ENCODE measurements at regions of chr1 and their contacts with region 1.

Region 1: DNA sequence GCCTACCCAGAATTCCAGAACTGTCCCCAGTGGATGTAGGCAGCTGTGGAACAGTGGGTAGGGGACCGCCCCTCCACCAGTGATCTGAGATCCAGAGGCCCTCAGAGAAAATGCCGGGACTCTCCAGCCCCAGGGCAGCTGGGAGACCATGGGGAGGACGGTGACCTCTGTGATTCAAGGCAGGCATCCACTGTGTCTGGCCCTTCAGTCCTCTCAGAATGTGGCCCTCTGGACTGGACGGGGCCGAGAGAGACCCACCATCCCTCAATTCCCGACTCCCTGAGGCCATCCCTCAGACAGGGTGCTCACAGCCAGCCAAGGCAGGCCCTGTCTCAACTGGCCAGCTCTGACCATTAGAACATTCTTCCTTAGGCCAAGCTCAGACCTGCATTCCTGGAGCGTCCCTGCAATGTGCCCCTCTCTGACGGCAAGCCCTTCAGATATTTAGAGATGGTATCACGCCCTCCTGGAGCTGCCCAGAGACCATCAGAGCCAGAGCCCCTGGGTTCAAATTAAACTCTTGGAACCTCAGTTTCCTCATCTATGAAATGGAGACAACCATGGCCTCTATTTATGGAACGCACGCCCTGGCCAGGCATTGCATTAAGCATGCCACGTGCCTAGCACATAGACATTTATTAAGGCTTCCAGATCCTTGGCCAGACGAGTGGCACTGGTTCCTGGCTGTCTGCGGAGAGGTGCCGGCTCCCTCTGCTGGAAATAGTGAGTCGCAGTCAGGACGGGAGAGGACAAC is 9.6 kb upstream of the EPS8L3 start:
- DNase-seq: peak; percentile 85
- ATAC-seq: peak; percentile 85
- H3K4me3 ChIP-seq: no peak overlapping the region
- H3K27ac ChIP-seq: no peak overlapping the region
- H3K4me1 ChIP-seq: peaks cover 24% of the 10 kb centered on the region
- H3K27me3 ChIP-seq: no peaks in the 10 kb centered on the region
- CTCF ChIP-seq: peak; percentile 99
- POLR2A ChIP-seq: peak; percentile 66
- RAD21 ChIP-seq: peak; percentile 100

Region 2: GRCh38 chr1:109643385-109644230 is 129.7 kb before region 1 on chr1:
- CTCF ChIA-PET with region 1: interaction called, 63 read pairs
- POLR2A ChIA-PET with region 1: interaction called, 3 read pairs
- dilution Hi-C with region 1: no loop called
- in situ Hi-C with region 1: loop called (anchors 5 kb)
- intact Hi-C with region 1: loop called (anchors 1 kb)
- DNase-seq: peak; percentile 65
- ATAC-seq: peak; percentile 77
- H3K4me3 ChIP-seq: no peak overlapping the region
- H3K27ac ChIP-seq: no peak overlapping the region
- H3K4me1 ChIP-seq: peaks cover 11% of the 10 kb centered on the region
- H3K27me3 ChIP-seq: no peaks in the 10 kb centered on the region
- CTCF ChIP-seq: peak; percentile 84
- POLR2A ChIP-seq: 0 out of 2 replicates have a peak, but pooled peaks have one; percentile 20
- RAD21 ChIP-seq: peak; percentile 87

Region 3: DNA sequence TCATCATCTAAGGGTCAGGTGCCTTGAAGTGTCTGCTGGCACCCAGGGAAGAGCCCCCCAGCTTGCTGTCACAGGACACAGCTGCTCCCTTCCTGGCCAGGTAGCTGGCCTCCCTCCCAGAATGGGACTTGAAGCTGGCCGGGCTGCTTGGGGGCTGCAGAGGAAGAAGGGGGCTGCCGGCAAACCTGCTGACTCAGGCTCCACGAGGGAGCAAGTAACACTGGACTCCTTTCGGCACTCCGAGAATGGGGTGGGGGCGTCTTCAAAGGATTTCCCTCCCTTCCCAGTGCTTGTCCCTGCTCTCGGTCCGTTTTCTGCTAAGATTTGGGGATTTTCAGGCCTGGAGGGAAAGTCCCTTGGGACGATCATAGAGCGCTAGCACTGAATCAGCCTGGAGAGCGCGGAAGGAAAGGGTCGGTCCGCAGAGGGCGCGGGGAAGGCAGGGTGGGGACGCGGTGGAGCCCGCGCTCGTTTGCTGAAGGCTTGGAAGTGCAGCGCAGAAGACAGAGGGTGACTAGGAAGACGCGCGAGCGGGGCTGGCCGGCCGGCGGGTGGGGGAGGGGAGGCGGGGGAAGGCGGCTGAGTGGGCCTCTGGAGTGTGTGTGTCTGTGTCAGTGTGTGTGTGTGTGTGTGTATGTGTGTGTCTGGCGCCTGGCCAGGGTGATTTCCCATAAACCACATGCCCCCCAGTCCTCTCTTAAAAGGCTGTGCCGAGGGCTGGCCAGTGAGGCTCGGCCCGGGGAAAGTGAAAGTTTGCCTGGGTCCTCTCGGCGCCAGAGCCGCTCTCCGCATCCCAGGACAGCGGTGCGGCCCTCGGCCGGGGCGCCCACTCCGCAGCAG is 137.0 kb after region 1 on chr1 and contains the start of gene CSF1:
- CTCF ChIA-PET with region 1: no interaction called
- POLR2A ChIA-PET with region 1: no interaction called
- dilution Hi-C with region 1: no loop called
- in situ Hi-C with region 1: loop called (anchors 25 kb)
- intact Hi-C with region 1: loop called (anchors 1 kb)
- DNase-seq: peak; percentile 86
- ATAC-seq: peak; percentile 68
- H3K4me3 ChIP-seq: peak within 1 kb of the TSS; percentile 98
- H3K27ac ChIP-seq: peak within 1 kb of the TSS; percentile 85
- H3K4me1 ChIP-seq: peaks cover 25% of the 10 kb centered on the region
- H3K27me3 ChIP-seq: no peaks in the 10 kb centered on the region; the same call in 1 of the 2 replicates
- CTCF ChIP-seq: no peak
- POLR2A ChIP-seq: peak; percentile 84
- RAD21 ChIP-seq: peak; percentile 4; the same call in 1 of the 2 replicates
- total RNA-seq, gene CSF1: 9.4 and 14.3 TPM in 2 replicates

Region 4: GRCh38 chr1:110011527-110012041 is 238.3 kb after region 1 on chr1:
- CTCF ChIA-PET with region 1: interaction called, 11 read pairs
- POLR2A ChIA-PET with region 1: no interaction called
- dilution Hi-C with region 1: no loop called
- in situ Hi-C with region 1: no loop called
- intact Hi-C with region 1: loop called (anchors 1 kb)
- DNase-seq: peak; percentile 73
- ATAC-seq: peak; percentile 96
- H3K4me3 ChIP-seq: no peak overlapping the region
- H3K27ac ChIP-seq: no peak overlapping the region
- H3K4me1 ChIP-seq: peaks cover 7% of the 10 kb centered on the region
- H3K27me3 ChIP-seq: no peaks in the 10 kb centered on the region
- CTCF ChIP-seq: peak; percentile 66
- POLR2A ChIP-seq: no peak
- RAD21 ChIP-seq: peak; percentile 73

Region 5: GRCh38 chr1:110106013-110106941 is 333.0 kb after region 1 on chr1:
- CTCF ChIA-PET with region 1: interaction called, 5 read pairs
- POLR2A ChIA-PET with region 1: no interaction called
- dilution Hi-C with region 1: no loop called
- in situ Hi-C with region 1: no loop called
- intact Hi-C with region 1: loop called (anchors 5 kb)
- DNase-seq: peak; percentile 69
- ATAC-seq: peak; percentile 98
- H3K4me3 ChIP-seq: no peak overlapping the region
- H3K27ac ChIP-seq: no peak overlapping the region
- H3K4me1 ChIP-seq: no peaks in the 10 kb centered on the region; the same call in 1 of the 2 replicates
- H3K27me3 ChIP-seq: peaks cover 46% of the 10 kb centered on the region
- CTCF ChIP-seq: peak; percentile 94
- POLR2A ChIP-seq: no peak
- RAD21 ChIP-seq: peak; percentile 92